ENCODE measurements at regions of chr10 and their contacts with region 1.

Region 1: DNA sequence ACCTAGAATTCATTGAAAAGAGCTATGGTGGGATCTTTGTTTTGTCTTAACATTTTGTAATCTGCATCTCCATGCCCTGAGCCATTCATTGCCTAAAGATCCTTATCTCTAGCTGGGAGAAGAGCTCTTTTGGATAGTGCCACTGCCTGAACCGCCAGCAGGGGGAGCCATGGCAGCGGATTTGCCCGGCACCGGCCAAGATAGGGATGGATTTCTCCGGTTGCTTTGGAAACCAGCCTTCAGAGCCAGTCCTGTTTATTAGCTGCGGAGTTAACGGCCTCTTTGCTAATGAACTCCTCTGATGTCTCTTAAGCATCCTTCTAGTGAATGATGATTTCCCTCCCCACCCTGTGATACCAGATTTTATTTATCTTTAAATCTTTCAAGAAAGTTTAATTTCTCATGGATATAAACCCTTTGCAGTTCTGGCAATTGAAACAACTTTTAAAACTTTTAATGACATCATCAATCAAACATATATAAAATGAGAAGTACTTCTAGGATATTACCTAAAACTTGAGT is 58.2 kb upstream of the LYZL2 start:
- DNase-seq: peak; percentile 63
- ATAC-seq: peak; percentile 71
- H3K4me3 Mint-ChIP-seq: no peak overlapping the region
- H3K27ac Mint-ChIP-seq: no peak overlapping the region
- H3K4me1 Mint-ChIP-seq: peaks cover 5% of the 10 kb centered on the region
- H3K27me3 Mint-ChIP-seq: peaks cover 21% of the 10 kb centered on the region
- CTCF ChIP-seq: peak; percentile 93

Region 2: GRCh38 chr10:30422981-30423654 is 264.6 kb before region 1 on chr10:
- CTCF ChIA-PET with region 1: no interaction called
- POLR2A ChIA-PET with region 1: no interaction called
- intact Hi-C with region 1: no loop called
- DNase-seq: no peak
- ATAC-seq: peak; percentile 11
- H3K4me3 Mint-ChIP-seq: peak overlapping the region; percentile 61
- H3K27ac Mint-ChIP-seq: peak overlapping the region; percentile 84
- H3K4me1 Mint-ChIP-seq: peaks cover 90% of the 10 kb centered on the region
- H3K27me3 Mint-ChIP-seq: no peaks in the 10 kb centered on the region
- CTCF ChIP-seq: no peak

Region 3: DNA sequence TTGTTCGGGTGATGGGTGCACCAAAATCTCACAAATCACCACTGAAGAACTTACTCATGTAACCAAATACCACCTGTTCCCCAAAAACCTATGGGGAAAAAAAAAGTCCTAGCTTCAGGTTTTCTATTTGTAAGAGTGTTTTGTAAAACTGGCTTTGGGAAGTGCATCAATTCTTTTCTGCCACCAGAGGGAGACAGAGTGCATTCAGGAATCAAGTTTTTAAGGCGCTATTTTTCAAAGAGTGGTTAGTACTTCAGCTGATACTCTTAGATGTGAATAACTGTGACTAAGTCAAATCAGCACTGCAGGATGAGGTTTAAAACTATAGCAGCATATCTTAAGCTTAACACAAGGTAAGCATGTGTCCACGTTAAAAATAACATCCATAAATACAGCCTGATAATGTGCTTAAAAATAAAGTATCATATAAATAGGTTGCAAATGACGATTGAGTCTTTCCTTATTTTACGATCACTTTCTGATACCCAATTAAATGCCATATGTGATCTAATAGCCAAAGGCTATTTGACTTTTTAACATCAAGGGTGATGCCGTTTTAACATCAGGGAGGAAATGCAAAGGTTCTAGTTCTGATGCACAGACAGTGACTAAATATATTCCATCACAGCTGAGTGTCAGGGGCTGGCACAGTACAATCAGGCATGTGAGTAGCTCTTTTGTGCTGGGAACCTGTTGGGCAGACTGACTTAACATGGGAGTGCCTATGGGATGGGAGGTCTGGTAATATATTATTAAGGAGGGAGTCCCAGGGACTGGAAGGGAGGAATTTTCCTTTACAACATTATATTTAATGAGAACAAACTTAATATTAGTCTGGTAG is 47.6 kb before region 1 on chr10:
- CTCF ChIA-PET with region 1: no interaction called
- POLR2A ChIA-PET with region 1: no interaction called
- intact Hi-C with region 1: no loop called
- DNase-seq: no peak
- ATAC-seq: no peak
- H3K4me3 Mint-ChIP-seq: no peak overlapping the region
- H3K27ac Mint-ChIP-seq: no peak overlapping the region
- H3K4me1 Mint-ChIP-seq: no peaks in the 10 kb centered on the region
- H3K27me3 Mint-ChIP-seq: peaks cover 33% of the 10 kb centered on the region
- CTCF ChIP-seq: peak; percentile 69

Region 4: GRCh38 chr10:30671026-30671616 is 16.6 kb before region 1 on chr10:
- CTCF ChIA-PET with region 1: interaction called, 33 read pairs
- POLR2A ChIA-PET with region 1: no interaction called
- intact Hi-C with region 1: no loop called
- DNase-seq: no peak
- ATAC-seq: peak; percentile 64
- H3K4me3 Mint-ChIP-seq: peak overlapping the region; percentile 61
- H3K27ac Mint-ChIP-seq: no peak overlapping the region
- H3K4me1 Mint-ChIP-seq: peaks cover 6% of the 10 kb centered on the region
- H3K27me3 Mint-ChIP-seq: peaks cover 16% of the 10 kb centered on the region
- CTCF ChIP-seq: peak; percentile 79

Region 5: DNA sequence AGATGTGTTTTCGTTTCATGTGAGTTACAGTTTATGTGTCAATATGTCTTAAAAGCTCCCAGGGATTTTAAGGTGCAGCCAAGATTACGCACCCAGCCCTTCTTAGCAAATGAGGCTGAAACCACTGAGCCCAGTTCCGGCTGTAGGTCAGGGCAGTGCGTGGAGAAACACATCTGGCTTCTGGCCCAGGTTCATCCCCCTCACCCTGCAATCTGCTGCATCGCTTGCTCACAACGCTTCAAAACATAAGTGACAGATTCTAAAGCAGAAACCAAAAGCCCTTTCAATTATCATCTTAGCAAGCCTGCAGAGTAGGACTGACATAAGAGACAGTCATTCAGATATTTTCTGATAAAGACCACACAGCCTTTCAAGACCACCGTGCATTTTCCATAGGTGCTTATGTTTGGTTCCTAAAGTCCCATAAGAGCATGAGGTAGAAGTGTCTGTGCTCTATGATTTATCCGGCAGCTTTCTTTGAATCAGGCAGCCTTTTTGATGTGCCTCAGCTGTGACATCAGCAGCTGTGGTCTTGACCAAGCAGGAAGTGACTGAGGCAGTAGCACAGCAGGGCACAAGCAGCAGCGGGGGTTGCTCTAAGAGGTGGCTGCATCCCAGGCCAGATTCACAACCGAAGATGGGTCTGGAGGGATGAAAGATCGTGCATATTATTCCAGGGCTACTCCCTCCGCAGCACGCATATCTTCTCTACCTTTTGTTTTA is 13.9 kb after region 1 on chr10:
- CTCF ChIA-PET with region 1: interaction called, 42 read pairs
- POLR2A ChIA-PET with region 1: interaction called, 4 read pairs
- intact Hi-C with region 1: loop called (anchors 1 kb)
- DNase-seq: no peak
- ATAC-seq: peak; percentile 61
- H3K4me3 Mint-ChIP-seq: peak overlapping the region; percentile 74
- H3K27ac Mint-ChIP-seq: peak overlapping the region; percentile 86
- H3K4me1 Mint-ChIP-seq: peaks cover 64% of the 10 kb centered on the region
- H3K27me3 Mint-ChIP-seq: no peaks in the 10 kb centered on the region
- CTCF ChIP-seq: no peak

Region 6: DNA sequence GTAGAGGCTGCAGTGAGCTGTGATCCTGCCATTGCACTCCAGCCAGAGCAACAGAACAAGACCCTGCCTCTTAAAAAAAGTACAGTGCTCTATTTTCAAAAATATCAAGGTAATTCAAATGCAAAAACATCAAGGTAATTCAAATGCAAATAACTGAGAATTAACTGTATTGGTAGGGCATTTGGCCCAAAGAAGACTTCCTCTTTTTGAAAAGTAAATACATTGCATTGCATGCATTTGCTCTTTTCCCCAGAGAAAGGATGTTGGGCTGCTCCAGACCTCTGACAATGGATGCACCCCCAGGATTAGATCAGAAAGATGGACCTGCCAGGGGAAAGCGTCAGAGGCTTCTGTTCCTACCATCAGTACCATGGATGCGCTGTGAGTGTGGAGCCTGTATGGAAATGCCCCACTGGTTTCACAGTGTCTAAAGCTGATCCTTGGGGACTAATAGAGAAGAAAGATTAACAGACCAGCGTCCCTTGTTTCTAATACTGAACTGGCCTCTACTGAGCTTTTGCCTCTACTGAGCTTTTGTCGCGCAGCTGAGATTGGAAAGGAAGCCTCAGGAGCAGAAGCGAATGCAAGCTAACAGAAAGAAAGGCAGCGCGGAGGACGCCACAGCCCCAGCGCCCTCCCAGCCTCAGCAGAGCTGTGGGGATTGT is 35.3 kb after region 1 on chr10:
- CTCF ChIA-PET with region 1: interaction called, 19 read pairs
- POLR2A ChIA-PET with region 1: no interaction called
- intact Hi-C with region 1: loop called (anchors 1 kb)
- DNase-seq: no peak
- ATAC-seq: peak; percentile 29
- H3K4me3 Mint-ChIP-seq: no peak overlapping the region
- H3K27ac Mint-ChIP-seq: no peak overlapping the region
- H3K4me1 Mint-ChIP-seq: peaks cover 15% of the 10 kb centered on the region
- H3K27me3 Mint-ChIP-seq: peaks cover 21% of the 10 kb centered on the region
- CTCF ChIP-seq: no peak

Region 7: GRCh38 chr10:31490858-31491504 is 803.2 kb after region 1 on chr10:
- CTCF ChIA-PET with region 1: no interaction called
- POLR2A ChIA-PET with region 1: no interaction called
- intact Hi-C with region 1: loop called (anchors 5 kb)
- DNase-seq: no peak
- ATAC-seq: peak; percentile 45
- H3K4me3 Mint-ChIP-seq: no peak overlapping the region
- H3K27ac Mint-ChIP-seq: no peak overlapping the region
- H3K4me1 Mint-ChIP-seq: no peaks in the 10 kb centered on the region
- H3K27me3 Mint-ChIP-seq: no peaks in the 10 kb centered on the region
- CTCF ChIP-seq: no peak

Region 8: DNA sequence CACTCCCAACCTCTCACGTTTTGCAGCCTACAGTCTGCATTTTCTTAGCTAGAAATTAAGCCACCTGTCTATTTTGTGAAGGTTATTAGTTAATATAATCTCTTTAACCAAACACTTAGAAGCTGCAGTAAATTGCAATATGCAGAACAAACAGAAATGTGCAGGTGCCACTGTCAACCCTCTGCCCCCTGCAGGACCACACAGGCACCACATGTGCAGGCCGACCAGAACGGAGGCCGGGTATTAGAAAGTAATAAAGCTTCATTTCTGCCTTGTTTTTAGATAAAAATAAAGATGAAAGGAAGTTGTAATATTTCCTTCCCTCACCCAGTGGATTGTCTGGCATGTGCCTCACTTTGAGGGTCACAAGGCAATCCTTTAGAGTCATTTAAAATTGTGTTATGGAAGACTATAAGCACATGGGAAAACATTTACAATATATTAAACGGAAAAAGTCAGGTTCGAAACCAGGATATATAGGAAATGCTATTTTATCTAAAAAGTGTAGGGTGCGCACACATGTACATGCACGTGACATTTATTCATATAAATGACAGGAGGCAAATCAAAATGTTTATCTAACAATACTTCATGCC is 1082.6 kb after region 1 on chr10:
- CTCF ChIA-PET with region 1: interaction called, 5 read pairs
- POLR2A ChIA-PET with region 1: no interaction called
- intact Hi-C with region 1: loop called (anchors 1 kb)
- DNase-seq: no peak
- ATAC-seq: peak; percentile 96
- H3K4me3 Mint-ChIP-seq: no peak overlapping the region
- H3K27ac Mint-ChIP-seq: no peak overlapping the region
- H3K4me1 Mint-ChIP-seq: no peaks in the 10 kb centered on the region
- H3K27me3 Mint-ChIP-seq: no peaks in the 10 kb centered on the region
- CTCF ChIP-seq: peak; percentile 53

Region 9: GRCh38 chr10:31808258-31809218 is 1120.8 kb after region 1 on chr10:
- CTCF ChIA-PET with region 1: interaction called, 9 read pairs
- POLR2A ChIA-PET with region 1: no interaction called
- intact Hi-C with region 1: loop called (anchors 1 kb)
- DNase-seq: no peak
- ATAC-seq: no peak
- H3K4me3 Mint-ChIP-seq: no peak overlapping the region
- H3K27ac Mint-ChIP-seq: peak overlapping the region; percentile 6
- H3K4me1 Mint-ChIP-seq: peaks cover 7% of the 10 kb centered on the region
- H3K27me3 Mint-ChIP-seq: no peaks in the 10 kb centered on the region
- CTCF ChIP-seq: no peak